Activated CD4-positive, alpha-beta T cell treated with anti-CD3 and anti-CD28 coated beads for 36 hours (primary cell): ENCODE measurements at regions of chr15 and their contacts with region 1.

Region 1: DNA sequence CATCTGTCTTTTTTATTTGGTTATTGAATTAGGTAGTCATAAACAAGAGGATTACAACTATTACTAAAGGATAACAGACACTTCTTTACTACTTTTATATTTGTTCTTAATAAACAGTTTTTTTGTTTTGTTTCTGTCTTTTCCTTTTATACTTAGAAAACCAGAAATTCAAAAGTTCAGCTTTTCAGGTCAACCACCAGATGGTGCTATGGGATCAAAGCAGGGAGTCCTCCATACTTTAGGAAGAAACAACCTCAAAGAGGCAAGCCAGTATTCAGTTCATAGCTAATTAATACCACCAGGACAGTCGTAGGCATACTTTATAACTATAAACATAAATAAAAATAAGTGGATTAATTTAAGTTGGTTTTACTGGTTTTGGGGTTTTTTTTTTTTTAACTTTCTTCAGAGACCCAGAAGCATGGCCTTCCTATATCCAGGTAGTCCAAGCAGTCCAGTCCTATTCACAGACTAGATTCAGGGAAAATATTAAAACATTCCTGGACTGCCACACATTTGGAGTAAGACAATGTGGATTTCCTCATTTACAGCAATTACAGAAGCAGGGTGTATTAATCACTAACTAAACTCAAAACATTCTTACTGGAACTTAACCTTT is 16.0 kb upstream of the EID1 start:
- DNase-seq: peak; percentile 58
- ATAC-seq: peak; percentile 59
- H3K4me3 Mint-ChIP-seq: no peak overlapping the region
- H3K27ac Mint-ChIP-seq: no peak overlapping the region
- H3K4me1 Mint-ChIP-seq: peaks cover 6% of the 10 kb centered on the region
- H3K27me3 Mint-ChIP-seq: peaks cover 3% of the 10 kb centered on the region

Region 2: DNA sequence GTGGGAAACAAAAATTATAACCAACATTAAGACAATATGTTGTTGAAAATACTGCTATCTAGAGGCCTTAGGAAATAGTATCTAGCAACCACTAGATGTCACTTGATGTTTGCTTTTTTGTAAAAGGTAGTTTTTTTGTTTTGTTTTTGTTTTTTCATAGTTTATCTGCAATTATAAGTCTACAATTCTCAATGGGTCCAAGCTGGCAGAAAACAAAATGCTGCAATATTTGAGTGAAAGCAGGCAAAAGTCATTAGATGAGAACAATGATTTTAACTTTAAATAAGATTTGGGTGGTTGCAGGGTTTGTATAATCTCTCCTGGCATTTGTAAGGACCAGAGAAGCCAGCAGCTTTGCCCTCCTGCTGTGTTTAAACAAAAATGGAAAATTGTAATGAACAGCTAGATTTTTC is 503.7 kb before region 1 on chr15:
- CTCF ChIA-PET with region 1: no interaction called
- POLR2A ChIA-PET with region 1: no interaction called
- intact Hi-C with region 1: loop called in 1 of 2 experiments (anchors 2 kb)
- DNase-seq: no peak
- ATAC-seq: no peak
- H3K4me3 Mint-ChIP-seq: no peak overlapping the region
- H3K27ac Mint-ChIP-seq: no peak overlapping the region
- H3K4me1 Mint-ChIP-seq: peaks cover 7% of the 10 kb centered on the region
- H3K27me3 Mint-ChIP-seq: no peaks in the 10 kb centered on the region

Region 3: DNA sequence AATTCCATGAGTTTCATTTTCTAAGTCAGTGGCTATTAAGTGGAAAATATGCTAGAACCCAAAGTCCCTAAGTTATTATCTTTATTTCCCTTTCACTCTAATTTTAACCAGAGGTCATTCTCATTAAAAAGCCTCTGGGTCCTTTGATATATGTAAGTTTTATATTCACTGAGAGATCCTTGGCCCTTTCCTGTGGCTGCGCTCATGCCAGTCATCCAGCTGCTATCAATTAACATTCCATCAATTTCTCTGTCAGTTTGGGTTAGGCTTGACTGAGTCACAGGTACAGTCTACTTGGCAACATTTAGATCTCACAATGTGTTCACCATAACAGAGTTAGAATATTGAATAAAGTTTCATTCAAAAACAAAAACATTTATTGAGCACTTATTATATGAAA is 158.4 kb before region 1 on chr15:
- CTCF ChIA-PET with region 1: no interaction called
- POLR2A ChIA-PET with region 1: no interaction called
- intact Hi-C with region 1: no loop called
- DNase-seq: no peak
- ATAC-seq: no peak
- H3K4me3 Mint-ChIP-seq: no peak overlapping the region
- H3K27ac Mint-ChIP-seq: no peak overlapping the region
- H3K4me1 Mint-ChIP-seq: no peaks in the 10 kb centered on the region
- H3K27me3 Mint-ChIP-seq: no peaks in the 10 kb centered on the region

Region 4: DNA sequence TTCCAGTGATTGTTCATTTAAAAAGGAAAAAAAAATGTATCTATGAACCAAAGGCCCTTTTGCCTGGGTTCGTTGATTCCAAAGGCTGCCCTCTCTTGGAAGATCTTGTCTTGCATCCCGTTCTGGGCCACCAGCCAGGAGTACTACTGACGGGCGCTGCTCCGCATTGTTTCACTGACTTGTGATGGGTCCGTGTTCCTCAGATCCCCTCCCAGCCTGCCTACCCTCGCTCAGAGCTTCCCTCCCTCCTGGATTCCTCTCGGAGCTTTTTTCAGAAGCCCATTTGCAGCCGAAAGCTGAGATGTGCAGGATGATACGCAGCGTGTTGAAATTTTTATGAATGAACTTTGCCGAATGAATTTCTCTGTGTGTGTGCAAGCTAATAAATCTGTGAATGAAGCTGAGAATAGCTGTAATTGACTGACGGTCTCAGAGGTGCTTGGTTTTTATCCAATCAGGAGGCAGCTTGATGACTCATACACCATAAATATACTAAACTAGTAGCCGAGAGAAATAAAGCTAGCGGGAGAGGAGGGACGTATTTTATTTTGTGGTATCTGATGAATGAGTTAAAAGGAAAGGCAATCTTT is 101.7 kb after region 1 on chr15 and contains the start of gene SHC4:
- CTCF ChIA-PET with region 1: interaction called, 10 read pairs
- POLR2A ChIA-PET with region 1: no interaction called
- intact Hi-C with region 1: loop called in 1 of 2 experiments (anchors 2 kb)
- DNase-seq: peak; percentile 29
- ATAC-seq: peak; percentile 45
- H3K4me3 Mint-ChIP-seq: peak within 1 kb of the TSS; percentile 69
- H3K27ac Mint-ChIP-seq: peak within 1 kb of the TSS; percentile 84
- H3K4me1 Mint-ChIP-seq: peaks cover 34% of the 10 kb centered on the region
- H3K27me3 Mint-ChIP-seq: peaks cover 38% of the 10 kb centered on the region
- total RNA-seq, gene SHC4: 1.4 TPM

Region 5: DNA sequence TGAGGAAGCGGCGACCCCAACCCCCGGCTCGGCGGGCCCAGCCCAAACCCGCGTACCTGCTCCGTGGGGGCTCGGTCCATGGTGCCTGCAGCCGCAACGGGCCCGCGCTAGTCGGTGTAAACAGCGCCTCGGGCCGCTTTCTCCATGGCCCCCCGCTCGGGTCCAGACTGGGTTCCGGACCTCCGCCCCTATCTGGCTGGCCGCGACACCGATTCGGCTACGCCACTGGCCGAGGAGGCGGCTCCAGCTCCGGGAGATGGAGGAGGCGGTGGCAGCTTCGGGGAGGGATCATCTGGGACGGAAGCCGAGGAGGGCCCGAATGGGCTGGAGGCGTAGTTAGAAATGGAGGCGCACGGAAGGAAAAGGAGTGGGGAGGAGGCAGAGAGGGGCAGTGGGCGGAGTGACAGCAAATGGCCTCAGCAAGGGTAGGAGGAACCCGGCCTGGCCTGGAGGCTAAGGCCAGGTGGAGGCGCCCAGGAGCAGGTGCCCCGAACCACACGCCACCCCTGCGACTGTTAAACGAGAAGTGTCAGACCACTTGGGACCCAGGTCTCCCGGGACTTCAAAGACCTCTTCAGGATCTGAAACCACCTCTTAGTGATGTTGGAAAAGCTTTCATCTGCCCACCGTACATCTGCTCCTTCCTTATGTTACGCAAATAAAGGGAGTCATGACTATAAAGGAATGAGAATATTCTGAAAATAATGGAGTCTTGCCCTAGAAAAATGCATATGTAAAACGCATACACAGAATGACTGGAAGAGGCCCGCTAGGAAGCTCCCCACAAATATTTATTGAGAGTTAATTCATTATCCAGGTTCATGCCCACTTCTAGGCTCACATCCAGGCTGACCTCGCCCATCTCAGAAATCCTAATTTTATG is 184.5 kb after region 1 on chr15 and contains the start of gene SECISBP2L:
- CTCF ChIA-PET with region 1: interaction called, 7 read pairs
- POLR2A ChIA-PET with region 1: no interaction called
- intact Hi-C with region 1: loop called (anchors 5 kb)
- DNase-seq: peak; percentile 95
- ATAC-seq: peak; percentile 97
- H3K4me3 Mint-ChIP-seq: peak within 1 kb of the TSS; percentile 92
- H3K27ac Mint-ChIP-seq: peak within 1 kb of the TSS; percentile 84
- H3K4me1 Mint-ChIP-seq: peaks cover 22% of the 10 kb centered on the region
- H3K27me3 Mint-ChIP-seq: no peaks in the 10 kb centered on the region
- total RNA-seq, gene SECISBP2L: 22.4 to 36.8 TPM

Region 6: DNA sequence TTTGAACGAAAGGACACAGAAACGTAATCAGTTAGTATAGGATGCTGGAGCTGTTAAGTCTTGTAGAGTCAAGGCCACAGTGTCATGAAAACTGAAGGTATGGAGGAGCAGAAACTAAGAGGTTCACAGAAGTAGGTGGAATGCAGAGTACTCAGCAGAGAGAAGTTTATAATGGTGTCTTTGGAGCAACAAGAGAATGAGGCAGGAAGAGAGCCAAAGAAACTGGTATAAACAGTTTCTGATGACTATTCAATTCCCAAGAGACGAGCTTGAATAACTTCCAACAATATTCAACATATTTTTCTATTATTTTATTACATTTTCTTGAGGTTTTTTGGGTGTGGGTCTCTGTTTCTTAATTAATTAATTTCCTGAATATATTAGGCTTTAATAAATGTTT is 337.7 kb after region 1 on chr15:
- CTCF ChIA-PET with region 1: no interaction called
- POLR2A ChIA-PET with region 1: no interaction called
- intact Hi-C with region 1: no loop called
- DNase-seq: no peak
- ATAC-seq: no peak
- H3K4me3 Mint-ChIP-seq: no peak overlapping the region
- H3K27ac Mint-ChIP-seq: no peak overlapping the region
- H3K4me1 Mint-ChIP-seq: peaks cover 8% of the 10 kb centered on the region
- H3K27me3 Mint-ChIP-seq: no peaks in the 10 kb centered on the region

Region 7: GRCh38 chr15:49421991-49422390 is 560.1 kb after region 1 on chr15:
- CTCF ChIA-PET with region 1: interaction called, 35 read pairs
- POLR2A ChIA-PET with region 1: no interaction called
- intact Hi-C with region 1: loop called (anchors 1 to 2 kb)
- DNase-seq: peak; percentile 51
- ATAC-seq: peak; percentile 26
- H3K4me3 Mint-ChIP-seq: no peak overlapping the region
- H3K27ac Mint-ChIP-seq: no peak overlapping the region
- H3K4me1 Mint-ChIP-seq: peaks cover 4% of the 10 kb centered on the region
- H3K27me3 Mint-ChIP-seq: no peaks in the 10 kb centered on the region

Region 8: GRCh38 chr15:50145451-50145872 is 1283.5 kb after region 1 on chr15:
- CTCF ChIA-PET with region 1: interaction called, 13 read pairs
- POLR2A ChIA-PET with region 1: no interaction called
- intact Hi-C with region 1: loop called (anchors 1 kb)
- DNase-seq: no peak
- ATAC-seq: no peak
- H3K4me3 Mint-ChIP-seq: no peak overlapping the region
- H3K27ac Mint-ChIP-seq: no peak overlapping the region
- H3K4me1 Mint-ChIP-seq: peaks cover 32% of the 10 kb centered on the region
- H3K27me3 Mint-ChIP-seq: no peaks in the 10 kb centered on the region